ENCODE measurements at regions of chr15 and their contacts with region 1.

Region 1: GRCh38 chr15:91852741-91853510 is 582 bp upstream of the SLCO3A1 start:
- DNase-seq: peak; percentile 67
- H3K4me3 ChIP-seq: peak overlapping the region; percentile 72 to 77 (median 75)
- H3K27ac ChIP-seq: peak overlapping the region; percentile 70
- H3K4me1 ChIP-seq: peaks cover 26% of the 10 kb centered on the region
- H3K27me3 ChIP-seq: no peaks in the 10 kb centered on the region
- CTCF ChIP-seq: peak; percentile 36 to 66

Region 2: DNA sequence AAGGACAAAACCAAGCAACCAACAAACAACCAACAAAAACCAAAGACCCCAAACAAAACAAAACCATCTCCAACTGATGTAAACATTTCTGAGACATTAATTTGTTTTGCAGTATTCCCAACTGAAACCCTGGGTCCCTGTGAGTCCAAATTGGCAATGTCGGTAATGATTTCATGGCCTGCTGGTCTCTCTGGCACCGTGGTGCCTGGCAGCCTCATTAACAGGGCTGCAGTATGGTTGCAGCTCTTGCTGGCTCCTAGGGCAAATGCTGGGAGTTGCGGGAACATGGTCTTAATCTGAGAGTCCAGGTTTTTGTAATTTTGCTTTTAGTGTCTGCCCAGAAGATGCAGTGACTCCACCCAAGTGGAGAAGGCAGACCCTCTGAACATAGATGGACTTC is 624.5 kb before region 1 on chr15:
- CTCF ChIA-PET with region 1: no interaction called
- dilution Hi-C with region 1: no loop called
- in situ Hi-C with region 1: no loop called
- intact Hi-C with region 1: no loop called
- DNase-seq: no peak
- H3K4me3 ChIP-seq: no peak overlapping the region
- H3K27ac ChIP-seq: no peak overlapping the region
- H3K4me1 ChIP-seq: no peaks in the 10 kb centered on the region
- H3K27me3 ChIP-seq: no peaks in the 10 kb centered on the region
- CTCF ChIP-seq: no peak

Region 3: GRCh38 chr15:91302588-91303439 is 550.1 kb before region 1 on chr15:
- CTCF ChIA-PET with region 1: no interaction called
- dilution Hi-C with region 1: no loop called
- in situ Hi-C with region 1: loop called in 1 of 2 experiments (anchors 25 kb)
- intact Hi-C with region 1: loop called (anchors 1 kb)
- DNase-seq: peak; percentile 57
- H3K4me3 ChIP-seq: no peak overlapping the region
- H3K27ac ChIP-seq: no peak overlapping the region
- H3K4me1 ChIP-seq: no peaks in the 10 kb centered on the region
- H3K27me3 ChIP-seq: peaks cover 3% of the 10 kb centered on the region
- CTCF ChIP-seq: peak; percentile 62 to 79

Region 4: DNA sequence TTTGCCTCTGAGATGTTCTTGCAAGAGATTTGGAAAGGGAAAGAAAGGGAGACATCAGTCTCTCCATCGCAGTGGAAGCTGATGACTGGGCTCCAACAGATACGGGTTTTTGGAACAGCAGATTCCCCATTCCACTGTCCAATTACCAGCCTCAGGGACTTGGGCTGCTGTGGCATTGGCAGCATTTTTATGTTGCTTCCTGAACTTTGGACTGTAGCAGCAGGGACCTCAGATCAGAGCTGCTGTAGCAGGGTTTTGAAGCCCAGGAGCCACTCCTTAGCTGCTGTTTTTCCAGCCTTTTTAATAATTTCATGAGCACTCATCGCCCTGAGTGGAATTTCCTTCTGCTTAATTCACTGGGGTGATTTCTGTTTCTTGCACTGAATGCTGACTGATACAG is 135.1 kb before region 1 on chr15:
- CTCF ChIA-PET with region 1: no interaction called
- dilution Hi-C with region 1: no loop called
- in situ Hi-C with region 1: no loop called
- intact Hi-C with region 1: loop called (anchors 5 kb)
- DNase-seq: no peak
- H3K4me3 ChIP-seq: no peak overlapping the region
- H3K27ac ChIP-seq: no peak overlapping the region
- H3K4me1 ChIP-seq: no peaks in the 10 kb centered on the region
- H3K27me3 ChIP-seq: peaks cover 2% of the 10 kb centered on the region
- CTCF ChIP-seq: no peak

Region 5: GRCh38 chr15:91752081-91752785 is 100.7 kb before region 1 on chr15:
- CTCF ChIA-PET with region 1: no interaction called
- dilution Hi-C with region 1: no loop called
- in situ Hi-C with region 1: no loop called
- intact Hi-C with region 1: no loop called
- DNase-seq: no peak
- H3K4me3 ChIP-seq: no peak overlapping the region
- H3K27ac ChIP-seq: no peak overlapping the region
- H3K4me1 ChIP-seq: no peaks in the 10 kb centered on the region
- H3K27me3 ChIP-seq: no peaks in the 10 kb centered on the region
- CTCF ChIP-seq: no peak

Region 6: GRCh38 chr15:91885714-91886270 is 32.9 kb after region 1 on chr15:
- CTCF ChIA-PET with region 1: interaction called, 4 read pairs
- dilution Hi-C with region 1: no loop called
- in situ Hi-C with region 1: no loop called
- intact Hi-C with region 1: loop called (anchors 2 kb)
- DNase-seq: no peak
- H3K4me3 ChIP-seq: no peak overlapping the region
- H3K27ac ChIP-seq: no peak overlapping the region
- H3K4me1 ChIP-seq: peaks cover 32% of the 10 kb centered on the region
- H3K27me3 ChIP-seq: no peaks in the 10 kb centered on the region
- CTCF ChIP-seq: peak in 1 of 2 donors; percentile 38

Region 7: GRCh38 chr15:91942676-91943576 is 90.0 kb after region 1 on chr15:
- CTCF ChIA-PET with region 1: interaction called, 25 read pairs
- dilution Hi-C with region 1: no loop called
- in situ Hi-C with region 1: loop called in 1 of 2 experiments (anchors 10 kb)
- intact Hi-C with region 1: loop called (anchors 1 kb)
- DNase-seq: peak; percentile 99
- H3K4me3 ChIP-seq: peak overlapping the region in 1 of 3 experiments; percentile 5
- H3K27ac ChIP-seq: peak overlapping the region; percentile 96
- H3K4me1 ChIP-seq: peaks cover 58% of the 10 kb centered on the region
- H3K27me3 ChIP-seq: no peaks in the 10 kb centered on the region
- CTCF ChIP-seq: no peak

Region 8: GRCh38 chr15:91973481-91973880 is 120.6 kb after region 1 on chr15:
- CTCF ChIA-PET with region 1: no interaction called
- dilution Hi-C with region 1: no loop called
- in situ Hi-C with region 1: no loop called
- intact Hi-C with region 1: loop called (anchors 1 kb)
- DNase-seq: peak; percentile 82
- H3K4me3 ChIP-seq: no peak overlapping the region
- H3K27ac ChIP-seq: peak overlapping the region; percentile 79
- H3K4me1 ChIP-seq: peaks cover 32% of the 10 kb centered on the region
- H3K27me3 ChIP-seq: no peaks in the 10 kb centered on the region
- CTCF ChIP-seq: peak; percentile 35 to 69

Region 9: DNA sequence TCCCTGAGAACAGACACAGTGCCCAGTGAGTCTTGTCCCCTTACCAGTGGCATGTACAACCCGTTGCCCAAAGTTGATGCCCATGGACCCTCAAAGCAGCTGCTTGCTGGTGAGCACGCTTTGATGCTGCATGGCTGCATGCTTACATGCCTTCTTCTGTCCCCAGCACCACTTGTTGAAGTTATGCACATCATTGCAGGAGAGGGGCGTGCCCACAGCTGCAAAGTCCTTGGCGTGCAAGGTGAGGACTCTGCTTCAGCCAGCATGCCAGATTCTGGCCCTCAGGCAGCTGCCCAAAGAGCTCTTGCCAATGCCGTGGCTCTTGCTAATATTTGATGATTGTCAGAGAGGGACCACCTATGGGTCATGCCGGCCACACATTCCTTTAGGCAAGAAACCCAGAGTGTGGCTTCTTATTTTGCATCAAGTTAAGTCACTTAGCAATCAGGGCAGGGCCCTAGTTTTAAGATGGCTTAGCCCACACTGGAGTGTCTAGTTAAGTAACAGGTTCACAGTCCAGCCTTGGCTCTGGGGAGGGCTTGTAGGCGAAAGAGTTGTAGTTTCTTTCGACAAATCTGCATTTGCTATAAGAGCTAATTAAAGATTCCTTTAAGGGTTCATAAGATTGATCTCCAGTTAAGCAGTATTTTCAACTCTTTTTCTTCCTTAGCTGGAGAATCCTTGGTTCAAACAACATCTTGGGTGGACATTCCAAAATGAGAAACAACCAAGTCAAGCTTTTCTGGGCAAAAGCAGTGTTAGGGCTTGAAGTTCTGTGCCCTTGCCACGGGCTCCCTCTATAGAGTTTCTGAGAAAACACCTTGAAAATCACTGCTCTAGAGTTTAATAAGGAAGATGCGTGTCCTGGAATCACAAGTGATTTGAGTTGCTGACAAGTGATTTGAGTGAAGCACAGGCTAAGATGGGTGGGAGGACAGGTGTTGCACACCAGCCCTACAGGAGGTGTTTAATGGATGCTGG is 129.2 kb after region 1 on chr15:
- CTCF ChIA-PET with region 1: interaction called, 4 read pairs
- dilution Hi-C with region 1: no loop called
- in situ Hi-C with region 1: no loop called
- intact Hi-C with region 1: loop called (anchors 1 kb)
- DNase-seq: no peak
- H3K4me3 ChIP-seq: no peak overlapping the region
- H3K27ac ChIP-seq: no peak overlapping the region
- H3K4me1 ChIP-seq: peaks cover 9% of the 10 kb centered on the region
- H3K27me3 ChIP-seq: no peaks in the 10 kb centered on the region
- CTCF ChIP-seq: peak; percentile 29 to 62

Region 10: DNA sequence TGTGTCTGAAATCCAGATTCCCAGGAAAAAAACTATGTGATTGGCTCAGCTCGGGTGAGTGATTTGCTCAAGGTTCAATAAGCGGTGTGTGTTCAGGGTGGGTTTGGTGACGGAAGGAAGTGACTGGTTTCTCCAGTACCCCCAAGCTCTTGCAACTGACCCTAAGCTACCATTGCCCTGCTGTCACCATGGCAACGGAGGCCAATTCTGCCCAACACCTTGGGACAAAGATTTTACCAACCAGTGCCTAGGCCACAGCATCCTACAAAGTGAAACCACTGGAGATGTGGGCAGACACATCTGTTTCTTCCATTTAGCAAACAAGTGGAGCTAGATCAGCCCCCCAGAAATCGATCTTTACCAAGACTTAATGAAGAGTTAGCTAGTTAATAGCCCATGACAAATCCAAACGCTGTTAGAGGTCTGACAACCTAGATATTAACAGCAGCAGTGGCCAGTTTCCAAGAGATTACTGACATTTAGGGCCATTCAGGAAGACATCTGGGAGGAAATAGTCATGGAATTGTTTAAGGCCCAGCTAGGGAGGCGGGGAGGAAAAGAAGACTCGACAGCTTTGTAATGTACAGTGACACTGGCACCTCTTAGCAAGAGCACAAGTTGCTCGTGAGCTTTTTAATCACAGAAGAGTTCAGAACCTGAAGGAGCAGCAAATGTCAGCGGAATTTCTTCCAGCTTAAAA is 196.5 kb after region 1 on chr15:
- CTCF ChIA-PET with region 1: no interaction called
- dilution Hi-C with region 1: no loop called
- in situ Hi-C with region 1: no loop called
- intact Hi-C with region 1: no loop called
- DNase-seq: no peak
- H3K4me3 ChIP-seq: no peak overlapping the region
- H3K27ac ChIP-seq: no peak overlapping the region
- H3K4me1 ChIP-seq: no peaks in the 10 kb centered on the region
- H3K27me3 ChIP-seq: no peaks in the 10 kb centered on the region
- CTCF ChIP-seq: no peak